Activated CD8-positive, alpha-beta T cell treated with anti-CD3 and anti-CD28 coated beads, Interleukin-2, amount 10 ng/mL, durations not matched to agents 7 days and 5 days (primary cell): ENCODE measurements at regions of chr18 and their contacts with region 1.

Region 1: GRCh38 chr18:70469916-70470315 is 181.1 kb downstream of the SOCS6 start:
- DNase-seq: no peak
- ATAC-seq: no peak
- H3K4me3 Mint-ChIP-seq: no peak overlapping the region
- H3K27ac Mint-ChIP-seq: no peak overlapping the region
- H3K4me1 Mint-ChIP-seq: no peaks in the 10 kb centered on the region
- H3K27me3 Mint-ChIP-seq: no peaks in the 10 kb centered on the region

Region 2: DNA sequence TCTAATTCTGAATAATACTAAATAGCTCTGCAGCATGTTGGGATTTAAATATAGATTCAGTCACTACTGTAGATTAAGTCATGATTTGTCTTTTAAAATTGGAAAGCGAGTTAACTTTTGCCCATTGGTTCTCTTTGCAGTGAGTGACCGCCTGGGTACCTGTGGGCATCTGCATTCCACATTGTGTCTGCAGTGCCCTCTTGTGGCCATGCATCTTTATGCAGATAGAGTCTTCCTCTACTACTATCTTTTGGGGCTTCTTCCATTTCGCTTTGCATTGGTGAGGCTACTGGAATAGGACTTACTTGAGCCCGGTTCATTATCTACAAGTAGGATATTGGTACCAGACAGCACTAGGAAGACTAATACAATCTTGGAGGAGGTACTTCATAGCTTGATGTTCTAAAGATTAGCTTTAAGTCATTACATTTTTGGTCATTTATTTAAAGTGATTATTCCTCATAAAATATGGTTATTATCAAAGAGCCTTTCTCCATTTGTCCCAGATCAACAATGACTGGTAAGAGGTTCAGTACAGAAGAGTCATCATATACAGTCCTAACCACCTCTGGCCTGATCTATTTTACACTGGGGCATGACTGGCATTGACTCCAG is 21.9 kb after region 1 on chr18:
- CTCF ChIA-PET with region 1: interaction called, 20 read pairs
- POLR2A ChIA-PET with region 1: no interaction called
- DNase-seq: peak; percentile 63
- ATAC-seq: peak; percentile 51
- H3K4me3 Mint-ChIP-seq: no peak overlapping the region
- H3K27ac Mint-ChIP-seq: no peak overlapping the region
- H3K4me1 Mint-ChIP-seq: no peaks in the 10 kb centered on the region
- H3K27me3 Mint-ChIP-seq: no peaks in the 10 kb centered on the region